HEK293 (cell line): ENCODE measurements at regions of chr18 and their contacts with region 1.

Region 1: GRCh38 chr18:62131301-62131909 is 55.5 kb downstream of the PIGN start:
- H3K4me3 ChIP-seq: no peak overlapping the region
- H3K27ac ChIP-seq: no peak overlapping the region
- H3K4me1 ChIP-seq: 0 out of 2 replicates have a peak, but pooled peaks cover 2% of the 10 kb centered on the region
- CTCF ChIP-seq: peak; percentile 77

Region 2: DNA sequence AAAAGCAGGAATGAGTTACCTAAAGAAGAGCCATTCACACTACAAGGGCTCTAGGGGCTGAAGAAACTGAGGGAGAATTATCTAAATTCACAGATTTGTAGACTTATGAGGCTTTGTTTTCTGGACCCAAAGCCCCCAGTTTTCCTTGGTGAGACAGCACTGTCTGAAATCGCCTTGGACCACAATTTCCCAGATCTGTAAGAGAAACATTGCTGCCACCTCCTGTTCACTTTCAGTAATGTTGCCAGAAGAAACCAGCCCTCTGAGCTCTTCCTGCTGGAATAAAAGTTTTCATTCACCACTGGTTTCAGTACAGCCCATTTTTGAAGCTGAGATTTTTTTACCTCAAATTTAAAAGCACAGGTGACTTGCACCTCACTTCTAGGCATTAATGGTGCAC is 628.9 kb before region 1 on chr18:
- CTCF ChIA-PET with region 1: interaction called, 19 read pairs
- POLR2A ChIA-PET with region 1: no interaction called
- H3K4me3 ChIP-seq: no peak overlapping the region
- H3K27ac ChIP-seq: no peak overlapping the region
- H3K4me1 ChIP-seq: no peaks in the 10 kb centered on the region
- CTCF ChIP-seq: no peak

Region 3: GRCh38 chr18:61551586-61551985 is 579.8 kb before region 1 on chr18:
- CTCF ChIA-PET with region 1: interaction called, 14 read pairs
- POLR2A ChIA-PET with region 1: no interaction called
- H3K4me3 ChIP-seq: no peak overlapping the region
- H3K27ac ChIP-seq: no peak overlapping the region
- H3K4me1 ChIP-seq: no peaks in the 10 kb centered on the region
- CTCF ChIP-seq: no peak

Region 4: DNA sequence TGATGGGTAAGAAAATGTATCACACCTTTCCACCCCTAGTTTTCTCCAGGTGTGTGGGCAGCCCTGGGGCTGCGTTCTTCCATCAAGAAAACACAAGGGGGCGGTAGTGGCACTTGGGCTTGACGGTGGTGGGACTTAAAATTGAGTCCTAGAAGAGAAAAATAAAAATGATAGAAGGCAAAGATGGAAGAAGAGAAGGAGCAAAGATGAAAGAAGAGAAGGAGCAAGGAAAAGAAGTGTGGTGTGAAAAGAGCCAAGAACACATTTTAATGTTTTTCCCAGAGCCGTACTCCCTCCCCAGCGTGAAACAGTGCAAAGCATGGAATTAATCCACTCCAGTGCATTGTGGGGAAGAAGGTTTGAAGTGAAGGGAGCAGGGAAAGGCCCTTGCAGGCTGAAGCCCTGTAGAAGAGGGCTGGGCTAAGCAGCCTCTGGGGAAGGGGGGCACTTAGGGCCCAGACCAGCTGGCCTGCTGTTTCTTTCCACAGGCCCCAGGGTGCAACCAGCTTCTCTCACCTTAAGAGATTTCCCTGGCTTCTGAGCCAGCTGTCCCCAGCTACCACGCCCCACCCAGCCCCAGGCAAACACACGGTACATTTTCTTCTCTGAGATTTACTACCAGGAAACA is 495.4 kb before region 1 on chr18:
- CTCF ChIA-PET with region 1: interaction called, 83 read pairs
- POLR2A ChIA-PET with region 1: no interaction called
- H3K4me3 ChIP-seq: no peak overlapping the region
- H3K27ac ChIP-seq: no peak overlapping the region
- H3K4me1 ChIP-seq: no peaks in the 10 kb centered on the region
- CTCF ChIP-seq: peak; percentile 42; the same call in 1 of the 2 replicates

Region 5: GRCh38 chr18:62144338-62144737 is 12.9 kb after region 1 on chr18:
- CTCF ChIA-PET with region 1: interaction called, 17 read pairs
- POLR2A ChIA-PET with region 1: no interaction called
- H3K4me3 ChIP-seq: no peak overlapping the region
- H3K27ac ChIP-seq: no peak overlapping the region
- H3K4me1 ChIP-seq: no peaks in the 10 kb centered on the region
- CTCF ChIP-seq: no peak